ENCODE measurements at regions of chr5 and their contacts with region 1.

Region 1: DNA sequence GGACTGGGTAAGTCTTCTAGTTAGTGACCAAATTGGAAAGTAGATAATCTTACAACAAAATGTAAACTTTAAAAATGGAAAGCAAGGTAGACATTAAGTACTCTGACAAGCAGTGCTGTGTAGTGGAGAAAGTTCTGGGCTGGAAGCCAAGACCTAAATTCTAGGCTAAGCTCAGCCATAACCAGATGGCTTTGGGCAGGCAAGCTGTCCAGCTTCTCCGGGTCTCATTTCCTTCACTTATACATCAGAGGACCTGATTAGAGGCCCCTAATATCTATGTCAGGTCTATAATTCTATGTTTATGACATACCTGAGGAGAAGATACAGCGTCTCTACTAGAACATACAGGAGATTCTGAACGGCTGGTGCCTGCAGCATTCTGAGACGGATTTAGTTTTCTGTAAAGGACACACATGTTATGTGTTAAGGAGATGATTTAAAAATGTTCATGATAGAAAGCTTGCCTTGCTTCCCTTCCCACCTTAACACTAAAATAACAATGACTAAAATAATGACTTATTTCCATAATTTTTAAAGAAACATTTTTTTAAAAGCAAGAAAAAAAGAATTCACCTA is 61.2 kb downstream of the ELL2 start:
- DNase-seq: no peak
- ATAC-seq: no peak
- H3K4me3 ChIP-seq: no peak overlapping the region
- H3K27ac ChIP-seq: no peak overlapping the region
- H3K4me1 ChIP-seq: peaks cover 15% of the 10 kb centered on the region; the same call in 1 of the 2 replicates
- H3K27me3 ChIP-seq: no peaks in the 10 kb centered on the region
- CTCF ChIP-seq: no peak

Region 2: GRCh38 chr5:95734906-95735305 is 165.6 kb before region 1 on chr5:
- CTCF ChIA-PET with region 1: no interaction called
- POLR2A ChIA-PET with region 1: no interaction called
- intact Hi-C with region 1: no loop called
- DNase-seq: no peak
- ATAC-seq: no peak
- H3K4me3 ChIP-seq: no peak overlapping the region
- H3K27ac ChIP-seq: no peak overlapping the region
- H3K4me1 ChIP-seq: peaks cover 19% of the 10 kb centered on the region
- H3K27me3 ChIP-seq: no peaks in the 10 kb centered on the region
- CTCF ChIP-seq: no peak

Region 3: GRCh38 chr5:95949810-95950209 is 49.3 kb after region 1 on chr5:
- CTCF ChIA-PET with region 1: no interaction called
- POLR2A ChIA-PET with region 1: interaction called, 3 read pairs
- intact Hi-C with region 1: loop called (anchors 5 kb)
- DNase-seq: no peak
- ATAC-seq: no peak
- H3K4me3 ChIP-seq: no peak overlapping the region
- H3K27ac ChIP-seq: no peak overlapping the region
- H3K4me1 ChIP-seq: peaks cover 2% of the 10 kb centered on the region; the same call in 1 of the 2 replicates
- H3K27me3 ChIP-seq: no peaks in the 10 kb centered on the region
- CTCF ChIP-seq: no peak

Region 4: DNA sequence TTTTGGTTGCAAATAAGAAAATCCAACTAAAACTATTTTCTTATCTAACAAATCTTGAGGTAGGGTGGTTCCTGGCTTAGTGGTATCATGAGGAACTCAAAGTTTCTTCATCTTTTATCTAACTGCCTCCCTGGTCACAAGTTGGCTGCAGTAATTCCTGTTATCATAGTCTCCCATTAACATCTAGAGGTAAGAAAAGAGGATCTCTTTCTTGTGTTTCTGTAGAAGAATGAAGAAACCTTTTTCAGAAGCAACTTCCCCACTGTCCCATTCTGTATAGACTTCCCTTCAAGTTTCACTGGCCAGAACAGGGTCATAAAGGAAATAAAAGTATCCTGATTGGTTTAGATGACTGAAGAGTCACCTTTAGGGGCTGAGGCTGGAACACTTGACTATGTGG is 143.0 kb after region 1 on chr5:
- CTCF ChIA-PET with region 1: no interaction called
- POLR2A ChIA-PET with region 1: no interaction called
- intact Hi-C with region 1: no loop called
- DNase-seq: no peak
- ATAC-seq: no peak
- H3K4me3 ChIP-seq: no peak overlapping the region
- H3K27ac ChIP-seq: no peak overlapping the region
- H3K4me1 ChIP-seq: no peaks in the 10 kb centered on the region
- H3K27me3 ChIP-seq: no peaks in the 10 kb centered on the region
- CTCF ChIP-seq: no peak